Activated T-helper 2 cell treated with anti-CD3 and anti-CD28 coated beads, Interferon-gamma antibody, Interleukin-2, Interleukin-4, amounts not matched to agents 10 μg/mL and 5 μg/mL and 100 μg/mL, durations not matched to agents 14 hours and 24 hours and 36 hours (primary cell): ENCODE measurements at regions of chr14 and their contacts with region 1.

Region 1: DNA sequence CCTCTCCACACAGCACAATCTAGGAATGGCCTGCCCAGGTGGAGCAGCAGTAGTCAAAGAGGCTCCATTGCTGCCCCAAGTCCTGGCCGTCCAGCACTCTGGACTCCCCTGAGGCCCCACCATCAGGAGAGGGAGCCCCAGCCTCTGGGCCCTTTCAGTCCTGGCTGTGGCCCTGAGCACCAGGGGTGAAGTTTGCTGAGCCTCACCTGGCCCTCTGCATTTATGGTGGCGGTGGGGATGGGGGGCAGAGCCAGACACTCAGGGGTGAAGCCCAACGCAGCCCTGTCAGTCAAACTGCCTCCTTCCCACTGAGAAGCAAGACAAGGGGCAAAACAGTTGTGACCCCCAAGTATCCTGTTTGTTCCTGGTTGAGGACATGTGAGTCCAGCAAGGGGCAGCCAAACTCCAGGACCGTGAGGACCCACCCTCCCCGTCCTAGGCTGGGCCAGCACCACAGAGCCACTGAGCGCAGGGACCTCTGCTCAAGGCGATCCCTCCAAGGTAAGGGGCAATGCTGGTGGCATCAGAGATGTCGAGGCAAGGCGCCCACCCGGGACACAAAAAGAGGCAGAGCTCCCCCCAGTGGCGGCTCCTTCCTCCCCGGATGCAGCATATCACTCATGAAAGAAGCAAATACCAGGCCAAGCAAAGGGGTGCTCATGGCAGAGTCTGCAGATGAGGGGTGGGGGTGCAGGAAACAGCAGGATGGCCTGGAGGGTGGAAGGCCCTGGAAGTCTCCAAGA is 4.8 kb upstream of the AMN start:
- DNase-seq: peak; percentile 28
- H3K4me3 Mint-ChIP-seq: no peak overlapping the region
- H3K27ac Mint-ChIP-seq: no peak overlapping the region
- H3K4me1 Mint-ChIP-seq: no peaks in the 10 kb centered on the region
- H3K27me3 Mint-ChIP-seq: no peaks in the 10 kb centered on the region

Region 2: DNA sequence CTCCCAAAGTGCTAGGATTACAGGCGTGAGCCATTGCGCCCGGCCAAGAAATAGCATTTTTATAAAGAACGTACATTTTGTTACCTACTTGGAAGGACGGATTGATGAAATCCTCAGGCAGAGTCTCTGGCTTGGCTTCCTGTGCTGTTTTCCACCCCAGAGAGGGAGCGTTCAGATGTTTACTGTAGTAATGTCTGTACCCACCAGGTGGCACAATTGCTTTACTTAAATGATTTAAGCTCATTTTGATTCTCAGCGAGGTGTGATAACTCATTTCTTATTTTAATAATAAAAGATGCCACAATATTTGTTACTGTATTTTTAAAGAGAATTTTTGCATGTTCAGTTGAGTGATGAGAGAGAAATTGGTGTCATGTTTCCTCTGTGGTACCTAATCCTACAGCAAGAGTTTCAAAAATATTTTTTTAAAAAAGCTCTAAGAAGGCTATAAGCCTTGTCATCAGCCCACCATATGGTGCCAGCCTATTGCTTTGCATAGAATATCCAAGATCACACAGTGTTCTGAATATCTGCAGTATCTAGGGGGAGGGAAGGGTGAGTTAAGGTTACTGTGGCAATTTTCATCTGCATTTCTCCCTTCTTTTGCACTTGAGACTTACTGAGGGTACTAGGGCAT is 223.0 kb before region 1 on chr14:
- intact Hi-C with region 1: loop called (anchors 2 kb)
- DNase-seq: peak; percentile 26
- H3K4me3 Mint-ChIP-seq: no peak overlapping the region
- H3K27ac Mint-ChIP-seq: no peak overlapping the region
- H3K4me1 Mint-ChIP-seq: peaks cover 27% of the 10 kb centered on the region
- H3K27me3 Mint-ChIP-seq: no peaks in the 10 kb centered on the region

Region 3: GRCh38 chr14:102993529-102993928 is 75.9 kb after region 1 on chr14:
- intact Hi-C with region 1: no loop called
- DNase-seq: no peak
- H3K4me3 Mint-ChIP-seq: no peak overlapping the region
- H3K27ac Mint-ChIP-seq: no peak overlapping the region
- H3K4me1 Mint-ChIP-seq: no peaks in the 10 kb centered on the region
- H3K27me3 Mint-ChIP-seq: peaks cover 4% of the 10 kb centered on the region